ENCODE measurements at regions of chr18 and their contacts with region 1.

Region 1: DNA sequence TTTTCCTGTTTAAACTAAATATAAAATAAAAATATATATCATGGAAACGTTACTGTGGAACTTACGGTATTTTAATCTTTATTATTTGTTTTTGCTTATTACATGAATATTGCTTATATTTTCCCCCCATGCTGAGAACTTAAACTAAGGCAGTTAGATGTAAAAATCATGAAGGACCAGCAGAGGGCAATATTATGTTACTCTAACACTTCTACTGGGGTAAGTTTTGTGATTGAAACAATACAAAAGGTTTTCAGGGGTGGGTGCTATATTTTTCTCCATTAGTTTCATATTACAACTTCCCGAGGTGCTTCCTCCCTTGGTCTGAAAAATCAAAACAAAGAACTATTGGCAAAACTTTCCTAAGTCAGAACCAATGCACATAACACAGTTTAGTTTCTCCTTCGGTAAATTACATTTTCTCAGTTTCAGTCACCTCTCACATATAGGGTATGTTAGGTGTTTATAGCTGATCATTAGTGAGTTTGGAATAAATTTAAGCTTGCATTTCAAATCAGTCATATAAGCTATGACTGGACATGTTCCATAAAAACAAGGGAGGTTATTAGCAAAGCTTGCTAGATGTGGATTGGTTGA is 54.8 kb downstream of the ZNF407 start:
- DNase-seq: peak in 3 of 14 experiments; percentile 48 to 57 (median 57)
- ATAC-seq: peak; percentile 49
- H3K4me3 ChIP-seq: no peak overlapping the region
- H3K4me3 Mint-ChIP-seq: no peak overlapping the region
- H3K27ac ChIP-seq: no peak overlapping the region
- H3K27ac Mint-ChIP-seq: no peak overlapping the region
- H3K4me1 ChIP-seq: no peaks in the 10 kb centered on the region
- H3K4me1 Mint-ChIP-seq: peaks cover 9% of the 10 kb centered on the region
- H3K27me3 ChIP-seq: no peaks in the 10 kb centered on the region
- H3K27me3 Mint-ChIP-seq: no peaks in the 10 kb centered on the region
- CTCF ChIP-seq: peak; percentile 73

Region 2: DNA sequence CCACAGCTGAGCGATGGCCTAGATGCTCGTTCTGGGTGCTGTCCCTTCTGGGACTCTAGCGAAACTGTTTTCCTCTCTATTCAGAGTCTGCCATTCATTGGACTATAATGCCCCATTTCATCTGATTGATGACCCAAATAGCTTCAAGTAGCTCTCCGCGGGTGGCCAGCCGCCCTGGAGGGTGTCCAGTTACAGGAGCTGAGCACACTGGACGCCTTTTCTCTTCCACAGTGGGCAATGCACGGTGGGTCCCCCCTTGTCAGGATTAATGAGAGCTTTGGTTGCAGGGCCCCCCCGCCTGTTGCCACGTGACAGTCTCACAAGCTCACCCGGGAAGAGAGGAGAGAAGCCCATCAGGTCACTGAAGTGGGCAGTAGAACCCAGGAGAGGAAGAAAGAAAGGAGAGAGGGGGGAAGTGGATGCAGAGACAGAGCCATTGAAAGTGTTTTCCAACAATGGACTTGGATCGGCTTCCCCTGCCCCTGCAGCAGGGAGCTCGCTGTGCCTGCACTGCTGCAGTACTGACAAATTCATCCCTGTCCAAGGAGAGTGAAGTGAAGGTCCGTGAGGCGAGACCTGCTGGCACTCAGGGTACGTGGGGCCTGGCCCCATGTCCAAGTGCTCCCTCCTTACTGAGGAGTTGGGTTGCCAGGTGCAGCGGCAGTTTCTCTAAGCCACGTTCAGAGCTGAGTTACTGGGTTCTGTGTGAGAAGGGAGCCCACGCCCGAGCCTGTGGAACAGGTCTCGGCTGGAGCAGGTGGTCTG is 240.2 kb before region 1 on chr18:
- CTCF ChIA-PET with region 1: no interaction called
- POLR2A ChIA-PET with region 1: no interaction called
- intact Hi-C with region 1: no loop called
- DNase-seq: no peak
- ATAC-seq: no peak
- H3K4me3 ChIP-seq: no peak overlapping the region
- H3K4me3 Mint-ChIP-seq: no peak overlapping the region
- H3K27ac ChIP-seq: no peak overlapping the region
- H3K27ac Mint-ChIP-seq: no peak overlapping the region
- H3K4me1 ChIP-seq: peaks cover 16% of the 10 kb centered on the region
- H3K4me1 Mint-ChIP-seq: peaks cover 24% of the 10 kb centered on the region
- H3K27me3 ChIP-seq: no peaks in the 10 kb centered on the region
- H3K27me3 Mint-ChIP-seq: no peaks in the 10 kb centered on the region
- CTCF ChIP-seq: no peak

Region 3: GRCh38 chr18:74665905-74666304 is 13.4 kb after region 1 on chr18:
- CTCF ChIA-PET with region 1: no interaction called
- POLR2A ChIA-PET with region 1: no interaction called
- intact Hi-C with region 1: no loop called
- DNase-seq: no peak
- ATAC-seq: no peak
- H3K4me3 ChIP-seq: no peak overlapping the region
- H3K4me3 Mint-ChIP-seq: no peak overlapping the region
- H3K27ac ChIP-seq: no peak overlapping the region
- H3K27ac Mint-ChIP-seq: no peak overlapping the region
- H3K4me1 ChIP-seq: no peaks in the 10 kb centered on the region
- H3K4me1 Mint-ChIP-seq: no peaks in the 10 kb centered on the region
- H3K27me3 ChIP-seq: no peaks in the 10 kb centered on the region
- H3K27me3 Mint-ChIP-seq: no peaks in the 10 kb centered on the region
- CTCF ChIP-seq: no peak

Region 4: GRCh38 chr18:74731097-74731496 is 78.6 kb after region 1 on chr18:
- CTCF ChIA-PET with region 1: no interaction called
- POLR2A ChIA-PET with region 1: no interaction called
- intact Hi-C with region 1: no loop called
- DNase-seq: no peak
- ATAC-seq: no peak
- H3K4me3 ChIP-seq: no peak overlapping the region
- H3K4me3 Mint-ChIP-seq: no peak overlapping the region
- H3K27ac ChIP-seq: no peak overlapping the region
- H3K27ac Mint-ChIP-seq: no peak overlapping the region
- H3K4me1 ChIP-seq: no peaks in the 10 kb centered on the region
- H3K4me1 Mint-ChIP-seq: no peaks in the 10 kb centered on the region
- H3K27me3 ChIP-seq: no peaks in the 10 kb centered on the region
- H3K27me3 Mint-ChIP-seq: no peaks in the 10 kb centered on the region
- CTCF ChIP-seq: no peak

Region 5: DNA sequence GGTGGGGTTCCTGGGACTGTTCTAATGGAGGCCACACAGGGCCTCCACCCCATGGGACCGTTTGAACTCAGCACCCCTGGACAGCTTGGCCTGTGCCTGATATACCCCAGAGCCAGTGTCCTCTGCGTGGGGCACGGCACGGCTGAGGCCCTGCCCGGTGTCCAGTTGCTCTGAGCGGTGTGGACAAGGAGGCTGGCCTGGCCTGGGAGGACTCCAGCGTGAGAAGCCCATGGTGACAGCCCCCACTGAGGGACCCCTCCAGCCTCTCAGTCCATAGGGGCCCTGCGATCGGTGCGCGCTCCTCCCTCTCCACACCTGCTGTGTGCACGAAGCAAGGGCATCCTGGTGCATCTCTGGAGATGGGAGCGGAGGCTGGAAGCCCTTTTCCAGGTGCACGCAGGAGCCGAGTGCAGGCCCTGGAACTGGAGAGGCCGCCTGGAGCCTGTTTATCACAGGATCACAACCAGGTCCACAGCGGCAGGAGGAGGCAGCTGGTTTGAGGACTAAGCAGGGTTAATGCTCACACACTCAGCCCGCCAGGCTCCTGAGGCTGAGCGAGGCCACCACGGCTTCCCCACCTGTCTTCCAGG is 436.2 kb after region 1 on chr18:
- CTCF ChIA-PET with region 1: no interaction called
- POLR2A ChIA-PET with region 1: no interaction called
- intact Hi-C with region 1: loop called in 1 of 2 experiments (anchors 10 kb)
- DNase-seq: no peak
- ATAC-seq: no peak
- H3K4me3 ChIP-seq: no peak overlapping the region
- H3K4me3 Mint-ChIP-seq: no peak overlapping the region
- H3K27ac ChIP-seq: no peak overlapping the region
- H3K27ac Mint-ChIP-seq: no peak overlapping the region
- H3K4me1 ChIP-seq: no peaks in the 10 kb centered on the region
- H3K4me1 Mint-ChIP-seq: no peaks in the 10 kb centered on the region
- H3K27me3 ChIP-seq: no peaks in the 10 kb centered on the region
- H3K27me3 Mint-ChIP-seq: no peaks in the 10 kb centered on the region
- CTCF ChIP-seq: no peak

Region 6: GRCh38 chr18:75247611-75248421 is 595.3 kb after region 1 on chr18:
- CTCF ChIA-PET with region 1: no interaction called
- POLR2A ChIA-PET with region 1: no interaction called
- intact Hi-C with region 1: loop called in 1 of 2 experiments (anchors 10 kb)
- DNase-seq: peak in 3 of 14 experiments; percentile 63 to 82 (median 64)
- ATAC-seq: peak; percentile 61
- H3K4me3 ChIP-seq: peak overlapping the region; percentile 51
- H3K4me3 Mint-ChIP-seq: peak overlapping the region; percentile 85
- H3K27ac ChIP-seq: peak overlapping the region; percentile 66 to 83
- H3K27ac Mint-ChIP-seq: peak overlapping the region; percentile 88
- H3K4me1 ChIP-seq: peaks cover 63% of the 10 kb centered on the region
- H3K4me1 Mint-ChIP-seq: peaks cover 73% of the 10 kb centered on the region
- H3K27me3 ChIP-seq: no peaks in the 10 kb centered on the region
- H3K27me3 Mint-ChIP-seq: no peaks in the 10 kb centered on the region
- CTCF ChIP-seq: no peak

Region 7: DNA sequence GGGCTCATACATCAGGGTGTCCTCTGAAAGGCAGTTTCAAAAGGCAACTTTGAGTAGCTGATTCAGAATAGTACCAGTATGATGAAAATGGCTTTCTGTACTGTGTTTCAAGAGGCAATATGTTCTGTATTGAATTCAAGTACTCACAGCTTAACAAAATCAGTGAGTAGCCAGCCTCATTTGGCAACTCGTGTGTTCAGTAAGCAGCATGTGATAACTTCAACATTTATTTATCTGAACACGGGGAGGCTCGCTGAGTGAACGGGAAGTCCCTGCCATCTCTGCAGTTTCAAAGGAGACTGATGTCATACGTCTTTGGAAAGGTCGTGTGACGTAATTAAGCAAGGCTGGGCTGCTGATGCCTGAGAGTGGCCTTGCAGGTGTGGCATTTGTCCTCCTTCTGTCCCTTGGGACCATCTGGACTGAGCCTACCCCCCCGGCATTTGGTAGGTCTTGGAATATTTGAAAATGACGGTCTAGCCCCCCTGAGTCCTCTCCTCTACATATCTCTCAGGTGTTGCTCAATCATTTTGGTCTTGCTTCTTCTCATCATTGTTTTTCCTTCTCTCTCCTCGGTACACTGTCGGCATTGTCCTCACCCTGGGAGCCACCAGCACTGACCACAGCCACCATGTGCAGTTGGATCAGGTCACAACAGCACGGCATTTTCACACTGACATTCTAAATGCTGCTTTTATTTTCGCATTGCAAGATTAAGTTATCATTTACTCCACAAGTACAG is 712.2 kb after region 1 on chr18:
- CTCF ChIA-PET with region 1: no interaction called
- POLR2A ChIA-PET with region 1: no interaction called
- intact Hi-C with region 1: loop called in 1 of 2 experiments (anchors 2 kb)
- DNase-seq: peak in 2 of 14 experiments; percentile 6 to 17
- ATAC-seq: no peak
- H3K4me3 ChIP-seq: no peak overlapping the region
- H3K4me3 Mint-ChIP-seq: no peak overlapping the region
- H3K27ac ChIP-seq: no peak overlapping the region
- H3K27ac Mint-ChIP-seq: no peak overlapping the region
- H3K4me1 ChIP-seq: no peaks in the 10 kb centered on the region
- H3K4me1 Mint-ChIP-seq: no peaks in the 10 kb centered on the region
- H3K27me3 ChIP-seq: peaks cover 0 to 2% of the 10 kb centered on the region in 2 experiments
- H3K27me3 Mint-ChIP-seq: peaks cover 2% of the 10 kb centered on the region
- CTCF ChIP-seq: no peak

Region 8: DNA sequence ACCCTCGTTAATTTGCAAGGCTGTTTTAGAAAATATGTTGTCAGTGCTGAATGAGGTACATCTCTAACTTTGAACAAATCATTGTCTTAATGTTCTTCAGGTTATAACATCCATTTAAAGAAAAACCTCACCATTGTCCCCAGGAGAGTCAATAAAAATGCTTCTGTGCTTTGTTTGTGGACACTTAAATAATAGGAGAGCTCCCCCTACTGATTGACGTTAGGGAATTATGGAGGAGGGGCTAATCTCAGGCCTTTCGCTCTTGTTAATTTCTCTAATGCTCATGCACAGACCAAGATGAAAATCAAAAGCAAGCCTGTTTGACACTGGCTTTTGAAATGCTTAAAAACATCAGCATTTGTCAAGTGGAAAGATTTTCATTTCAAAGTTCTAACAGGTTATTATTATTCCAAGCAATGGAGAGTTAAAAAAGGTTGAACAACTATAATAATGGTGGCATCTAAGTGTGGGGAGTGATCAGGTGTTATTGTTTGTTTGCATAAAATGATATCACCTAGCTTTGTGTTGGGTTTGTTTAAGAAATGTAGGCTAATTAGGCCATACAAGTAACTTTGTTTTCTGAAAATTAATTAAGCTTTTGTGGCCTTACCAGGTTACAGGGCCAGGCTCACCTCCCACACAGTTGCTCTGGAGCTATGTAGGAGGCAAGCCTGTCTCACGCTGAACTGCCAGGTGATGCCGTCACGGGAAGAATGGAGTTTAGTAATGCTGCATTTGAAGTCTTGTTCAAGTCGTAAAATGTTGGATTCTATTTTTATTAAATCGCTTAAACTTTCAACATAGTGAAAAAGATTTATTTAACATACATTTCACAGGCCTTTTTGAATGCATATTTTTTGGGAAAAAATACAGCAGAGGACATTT is 826.7 kb after region 1 on chr18:
- CTCF ChIA-PET with region 1: no interaction called
- POLR2A ChIA-PET with region 1: no interaction called
- intact Hi-C with region 1: loop called (anchors 1 to 2 kb)
- DNase-seq: peak in 3 of 14 experiments; percentile 53 to 70 (median 68)
- ATAC-seq: peak; percentile 39
- H3K4me3 ChIP-seq: no peak overlapping the region
- H3K4me3 Mint-ChIP-seq: no peak overlapping the region
- H3K27ac ChIP-seq: no peak overlapping the region
- H3K27ac Mint-ChIP-seq: no peak overlapping the region
- H3K4me1 ChIP-seq: no peaks in the 10 kb centered on the region
- H3K4me1 Mint-ChIP-seq: no peaks in the 10 kb centered on the region
- H3K27me3 ChIP-seq: peaks cover 5 to 8% of the 10 kb centered on the region in 2 experiments
- H3K27me3 Mint-ChIP-seq: peaks cover 20% of the 10 kb centered on the region
- CTCF ChIP-seq: peak; percentile 67

Region 9: DNA sequence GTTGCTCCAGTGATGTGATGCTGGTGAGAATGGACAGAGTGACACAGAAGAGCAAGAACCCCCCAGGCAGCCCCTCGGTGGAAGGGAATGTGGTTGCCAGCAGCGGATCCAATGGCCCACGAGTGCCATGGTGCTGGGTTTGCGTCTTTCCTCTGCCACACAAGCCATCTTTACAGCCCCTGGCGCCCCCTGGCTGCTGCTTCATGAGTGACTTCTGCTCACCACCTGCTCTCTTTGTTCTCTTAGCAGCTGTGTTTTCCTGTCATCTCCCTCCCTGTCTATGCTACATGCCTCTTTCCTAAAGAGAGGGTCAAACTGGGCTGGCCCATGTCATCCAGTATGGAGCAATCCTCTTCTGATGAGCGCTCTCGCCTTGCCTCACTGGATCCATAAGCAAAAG is 1075.0 kb after region 1 on chr18:
- CTCF ChIA-PET with region 1: no interaction called
- POLR2A ChIA-PET with region 1: no interaction called
- intact Hi-C with region 1: loop called in 1 of 2 experiments (anchors 10 kb)
- DNase-seq: peak in 6 of 14 experiments; percentile 3 to 24 (median 12)
- ATAC-seq: no peak
- H3K4me3 ChIP-seq: no peak overlapping the region
- H3K4me3 Mint-ChIP-seq: no peak overlapping the region
- H3K27ac ChIP-seq: no peak overlapping the region
- H3K27ac Mint-ChIP-seq: no peak overlapping the region
- H3K4me1 ChIP-seq: no peaks in the 10 kb centered on the region
- H3K4me1 Mint-ChIP-seq: no peaks in the 10 kb centered on the region
- H3K27me3 ChIP-seq: peaks cover 0 to 11% of the 10 kb centered on the region in 2 experiments
- H3K27me3 Mint-ChIP-seq: peaks cover 62% of the 10 kb centered on the region
- CTCF ChIP-seq: no peak

Region 10: GRCh38 chr18:76349067-76349715 is 1696.7 kb after region 1 on chr18:
- CTCF ChIA-PET with region 1: no interaction called
- POLR2A ChIA-PET with region 1: no interaction called
- intact Hi-C with region 1: loop called (anchors 1 to 5 kb)
- DNase-seq: peak; percentile 42 to 76 (median 46)
- ATAC-seq: peak; percentile 52
- H3K4me3 ChIP-seq: no peak overlapping the region
- H3K4me3 Mint-ChIP-seq: no peak overlapping the region
- H3K27ac ChIP-seq: no peak overlapping the region
- H3K27ac Mint-ChIP-seq: no peak overlapping the region
- H3K4me1 ChIP-seq: peaks cover 3% of the 10 kb centered on the region
- H3K4me1 Mint-ChIP-seq: peaks cover 7% of the 10 kb centered on the region
- H3K27me3 ChIP-seq: no peaks in the 10 kb centered on the region
- H3K27me3 Mint-ChIP-seq: no peaks in the 10 kb centered on the region
- CTCF ChIP-seq: peak; percentile 92

Measured in CD4-positive, alpha-beta T cell (primary cell).